ENCODE measurements at regions of chr10 and their contacts with region 1.

Region 1: GRCh38 chr10:8404391-8405120 is 350.1 kb downstream of the GATA3 start:
- DNase-seq: peak; percentile 51
- H3K4me3 Mint-ChIP-seq: peak overlapping the region; percentile 65
- H3K27ac Mint-ChIP-seq: peak overlapping the region; percentile 64
- H3K4me1 Mint-ChIP-seq: peaks cover 80% of the 10 kb centered on the region
- H3K27me3 Mint-ChIP-seq: no peaks in the 10 kb centered on the region

Region 2: DNA sequence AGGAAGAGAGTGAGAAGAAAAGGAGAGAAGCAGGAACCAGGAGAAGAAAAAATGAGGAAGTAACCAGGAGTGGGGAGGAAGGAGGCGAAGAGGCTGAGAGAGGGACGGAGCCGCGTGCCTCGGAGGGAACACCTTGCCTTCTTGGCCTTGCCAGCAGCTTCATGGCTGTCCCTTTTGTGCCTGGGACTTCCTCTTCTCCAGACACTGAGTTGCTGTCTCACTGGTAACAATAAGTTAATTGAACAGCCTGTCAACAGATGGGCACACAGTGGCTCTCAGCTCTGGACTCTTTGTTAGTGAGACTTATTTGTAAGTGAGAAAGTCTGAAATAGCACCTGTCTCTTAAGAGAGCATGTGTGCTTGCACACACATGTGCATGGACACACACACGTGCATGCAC is 266.8 kb before region 1 on chr10:
- CTCF ChIA-PET with region 1: no interaction called
- POLR2A ChIA-PET with region 1: interaction called, 4 read pairs
- intact Hi-C with region 1: loop called (anchors 2 kb)
- DNase-seq: peak; percentile 43
- H3K4me3 Mint-ChIP-seq: peak overlapping the region; percentile 59
- H3K27ac Mint-ChIP-seq: peak overlapping the region; percentile 86
- H3K4me1 Mint-ChIP-seq: peaks cover 57% of the 10 kb centered on the region
- H3K27me3 Mint-ChIP-seq: peaks cover 4% of the 10 kb centered on the region

Region 3: GRCh38 chr10:8279598-8279997 is 125.0 kb before region 1 on chr10:
- CTCF ChIA-PET with region 1: no interaction called
- POLR2A ChIA-PET with region 1: no interaction called
- intact Hi-C with region 1: no loop called
- DNase-seq: no peak
- H3K4me3 Mint-ChIP-seq: no peak overlapping the region
- H3K27ac Mint-ChIP-seq: no peak overlapping the region
- H3K4me1 Mint-ChIP-seq: peaks cover 12% of the 10 kb centered on the region
- H3K27me3 Mint-ChIP-seq: no peaks in the 10 kb centered on the region

Region 4: DNA sequence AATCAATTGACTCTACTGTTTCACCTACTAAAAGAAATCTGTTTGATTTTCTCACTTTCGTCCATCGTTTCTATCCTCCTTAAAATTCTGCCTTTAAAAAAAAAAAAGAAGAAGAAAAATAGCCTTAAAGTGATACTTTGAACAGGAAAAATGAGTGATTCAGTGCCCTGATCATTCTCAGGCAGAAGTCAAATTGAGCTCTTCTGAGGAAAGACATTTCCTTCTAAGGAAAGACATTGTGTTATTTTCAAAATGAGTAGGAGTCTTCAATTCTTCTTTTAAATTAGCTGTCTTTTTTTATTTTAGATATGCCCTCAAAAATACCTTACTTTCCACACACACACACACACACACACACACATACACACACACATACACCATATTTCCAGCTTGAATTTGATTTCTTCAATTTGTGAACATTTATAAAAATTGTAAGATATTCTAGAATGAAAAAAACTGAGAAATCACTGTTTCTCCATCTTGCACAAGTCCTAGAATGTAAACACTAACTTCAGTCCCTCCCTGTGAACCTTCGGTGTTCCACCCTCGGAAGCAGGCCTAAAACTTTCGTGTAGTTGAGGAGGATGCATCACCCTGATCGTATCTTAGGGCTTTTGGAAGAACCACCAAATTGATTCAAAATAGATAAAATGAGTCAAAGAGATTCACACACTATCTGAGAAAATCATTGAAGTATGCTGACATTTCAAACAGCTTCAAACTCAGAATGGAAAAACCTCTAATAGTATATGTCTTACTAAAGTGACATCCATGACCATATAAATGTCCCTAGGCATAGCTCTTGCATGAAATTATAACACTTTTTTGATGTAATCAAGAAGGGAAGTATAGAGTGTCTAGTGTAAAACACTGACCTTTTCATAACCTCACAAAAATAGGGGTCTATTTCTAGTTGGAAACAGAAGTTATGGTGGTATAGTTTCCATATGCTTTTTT is 79.3 kb before region 1 on chr10:
- CTCF ChIA-PET with region 1: interaction called, 4 read pairs
- POLR2A ChIA-PET with region 1: interaction called, 13 read pairs
- intact Hi-C with region 1: loop called (anchors 1 kb)
- DNase-seq: peak; percentile 53
- H3K4me3 Mint-ChIP-seq: peak overlapping the region; percentile 20
- H3K27ac Mint-ChIP-seq: peak overlapping the region; percentile 89
- H3K4me1 Mint-ChIP-seq: peaks cover 52% of the 10 kb centered on the region
- H3K27me3 Mint-ChIP-seq: peaks cover 3% of the 10 kb centered on the region

Region 5: DNA sequence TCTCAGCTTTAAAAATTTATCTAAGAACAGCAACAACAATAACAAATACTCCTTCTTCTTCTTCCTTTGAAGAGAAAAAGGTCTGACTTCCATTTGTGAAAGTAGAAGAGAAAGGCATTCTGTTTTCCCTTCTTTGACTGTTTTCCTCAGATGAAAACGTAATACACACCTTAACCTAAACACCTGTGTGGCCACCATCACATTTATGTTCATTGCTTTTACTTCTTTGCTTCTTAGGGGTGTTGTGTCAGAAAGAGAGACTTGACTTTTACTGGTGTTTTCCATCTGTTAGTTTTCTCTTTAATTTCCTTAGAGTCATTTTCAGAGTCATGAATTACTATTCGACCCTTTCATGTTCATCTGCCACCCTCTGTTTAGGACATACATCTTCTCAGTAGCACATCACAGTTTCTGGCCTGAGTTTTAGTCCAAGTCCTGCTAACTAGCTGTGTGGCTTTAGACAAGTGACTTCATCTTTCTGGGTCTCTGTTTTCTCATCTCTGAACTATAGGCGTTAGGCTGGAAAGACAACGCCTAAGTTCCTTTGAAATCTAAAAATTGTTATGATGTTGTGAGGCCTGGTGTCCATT is 66.3 kb before region 1 on chr10:
- CTCF ChIA-PET with region 1: no interaction called
- POLR2A ChIA-PET with region 1: interaction called, 4 read pairs
- intact Hi-C with region 1: loop called (anchors 1 kb)
- DNase-seq: peak; percentile 29
- H3K4me3 Mint-ChIP-seq: peak overlapping the region; percentile 64
- H3K27ac Mint-ChIP-seq: peak overlapping the region; percentile 94
- H3K4me1 Mint-ChIP-seq: peaks cover 45% of the 10 kb centered on the region
- H3K27me3 Mint-ChIP-seq: peaks cover 3% of the 10 kb centered on the region

Region 6: DNA sequence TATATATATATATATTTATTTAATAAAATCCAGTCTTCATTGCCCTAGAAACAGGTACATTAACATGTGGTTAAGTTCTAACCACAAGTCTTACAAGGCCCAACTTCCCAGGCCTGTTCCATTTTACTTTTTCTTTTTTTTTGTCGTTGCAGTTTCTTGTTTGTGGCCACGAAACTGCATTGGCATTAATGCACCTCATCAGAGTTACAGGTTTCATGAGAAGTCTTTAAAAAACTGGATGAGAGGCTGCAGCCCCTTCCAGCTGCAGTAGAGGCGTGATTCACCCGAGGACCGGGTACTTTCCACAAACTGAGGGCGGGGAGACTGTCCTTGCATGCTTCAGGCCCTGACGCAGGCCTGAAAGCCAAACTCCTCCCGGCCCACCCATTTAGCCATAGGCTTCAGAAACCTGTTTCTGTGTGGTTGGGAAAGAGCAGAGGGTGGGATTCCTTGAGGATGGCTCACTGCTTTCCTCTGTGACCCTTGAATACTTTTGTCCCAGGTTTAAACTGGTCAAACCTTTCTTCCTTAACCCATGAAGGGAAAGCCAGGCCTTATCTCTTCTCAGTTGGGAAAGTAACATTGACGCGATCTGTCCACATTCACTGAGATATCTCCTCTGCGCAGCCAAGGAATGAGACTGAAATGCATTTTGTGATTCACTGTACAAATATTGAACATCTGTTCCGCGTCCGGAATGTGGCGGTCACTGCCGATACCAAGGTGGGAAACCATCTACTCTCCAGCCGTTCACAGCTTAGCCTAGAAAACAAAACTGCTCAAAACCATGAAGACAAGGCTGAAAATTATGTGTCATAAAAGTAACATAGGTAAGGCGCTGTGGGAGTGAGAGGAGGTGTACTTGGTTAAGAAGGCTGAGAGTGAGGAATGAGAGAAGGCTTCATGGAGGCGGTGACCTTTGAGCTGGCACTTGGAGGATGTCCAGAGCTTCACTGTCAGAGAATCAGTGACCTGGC is 38.3 kb before region 1 on chr10:
- CTCF ChIA-PET with region 1: interaction called, 3 read pairs
- POLR2A ChIA-PET with region 1: interaction called, 10 read pairs
- intact Hi-C with region 1: loop called (anchors 2 kb)
- DNase-seq: peak; percentile 82
- H3K4me3 Mint-ChIP-seq: no peak overlapping the region
- H3K27ac Mint-ChIP-seq: peak overlapping the region; percentile 91
- H3K4me1 Mint-ChIP-seq: peaks cover 58% of the 10 kb centered on the region
- H3K27me3 Mint-ChIP-seq: no peaks in the 10 kb centered on the region

Region 7: DNA sequence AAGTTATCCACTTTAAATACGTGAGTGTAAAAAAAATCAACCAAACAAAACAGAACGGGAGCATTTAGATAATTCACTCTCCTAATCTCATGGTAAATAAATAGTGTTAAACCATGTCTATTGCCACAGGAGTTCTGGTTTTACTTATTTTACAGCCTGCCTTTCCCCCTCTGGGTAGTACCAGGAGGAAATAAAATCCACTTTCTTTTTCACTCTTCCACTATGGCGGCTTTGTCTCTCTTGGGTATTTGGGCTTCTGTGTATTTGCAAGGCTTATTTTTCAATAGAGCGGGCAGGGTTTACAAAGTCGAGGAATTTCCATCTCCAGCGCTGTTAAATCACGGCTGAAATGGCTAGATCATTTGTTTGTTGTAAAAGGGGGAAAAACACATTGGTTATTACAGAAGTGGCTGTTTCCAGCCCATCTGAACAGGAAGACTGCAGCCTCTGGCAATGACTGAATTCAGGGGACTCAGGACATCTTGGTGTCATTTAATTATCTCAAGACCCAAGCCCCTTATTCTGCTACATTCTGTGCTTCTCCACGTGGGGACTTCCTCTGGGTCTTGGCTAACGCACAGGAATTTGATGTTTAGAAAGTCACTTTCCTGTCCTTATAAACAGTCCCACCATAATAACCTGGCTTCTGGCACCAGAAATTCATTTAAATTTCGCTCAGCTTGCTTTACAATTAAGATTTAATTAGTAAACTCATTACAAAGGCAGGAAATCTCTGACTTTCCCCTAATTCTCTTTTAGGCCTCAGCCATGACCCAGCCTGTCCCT is 26.2 kb before region 1 on chr10:
- CTCF ChIA-PET with region 1: no interaction called
- POLR2A ChIA-PET with region 1: no interaction called
- intact Hi-C with region 1: no loop called
- DNase-seq: no peak
- H3K4me3 Mint-ChIP-seq: no peak overlapping the region
- H3K27ac Mint-ChIP-seq: no peak overlapping the region
- H3K4me1 Mint-ChIP-seq: peaks cover 8% of the 10 kb centered on the region
- H3K27me3 Mint-ChIP-seq: no peaks in the 10 kb centered on the region

Region 8: DNA sequence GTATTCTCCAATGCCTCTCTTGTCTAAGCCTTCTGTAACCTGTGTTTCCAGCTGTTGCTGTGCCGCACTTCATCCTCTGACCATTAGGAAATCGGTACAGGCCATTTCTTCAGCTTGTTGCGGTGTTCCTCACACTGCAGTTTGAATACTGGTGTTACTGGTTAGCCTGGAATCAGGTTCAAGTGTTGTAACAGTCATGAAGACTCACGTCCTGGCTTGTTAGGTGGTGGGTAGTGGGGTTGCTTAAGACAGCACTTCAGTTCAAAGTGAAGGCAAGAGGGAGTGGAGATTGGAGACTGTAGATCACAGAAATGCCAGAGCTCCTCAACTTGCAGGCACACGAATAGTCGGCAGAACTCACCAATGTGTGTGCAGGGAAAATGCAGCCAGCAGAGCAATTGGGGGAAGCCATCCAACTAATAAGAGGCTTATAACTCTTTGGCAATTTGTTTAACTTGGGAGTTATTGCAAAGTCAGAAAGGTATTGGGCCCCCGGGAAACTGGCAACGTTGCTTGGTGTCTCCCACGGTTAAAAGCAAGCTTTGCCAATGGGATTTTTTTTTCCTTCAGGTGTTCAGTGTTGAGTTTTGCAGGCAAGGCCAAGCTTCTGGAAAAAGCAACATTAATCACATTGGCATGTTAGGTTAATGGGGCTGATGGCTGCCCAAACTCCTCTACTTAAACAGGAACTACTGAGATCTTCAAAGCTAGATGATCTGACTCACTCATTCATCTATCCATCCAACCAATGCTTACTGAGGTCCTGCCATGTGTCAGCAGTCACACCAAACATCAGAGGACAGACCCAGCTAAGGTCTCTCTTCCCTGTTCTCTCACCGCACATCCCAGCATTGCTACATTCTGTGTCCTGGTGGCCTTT is 30.9 kb after region 1 on chr10:
- CTCF ChIA-PET with region 1: no interaction called
- POLR2A ChIA-PET with region 1: no interaction called
- intact Hi-C with region 1: no loop called
- DNase-seq: no peak
- H3K4me3 Mint-ChIP-seq: no peak overlapping the region
- H3K27ac Mint-ChIP-seq: no peak overlapping the region
- H3K4me1 Mint-ChIP-seq: peaks cover 31% of the 10 kb centered on the region
- H3K27me3 Mint-ChIP-seq: no peaks in the 10 kb centered on the region

Region 9: DNA sequence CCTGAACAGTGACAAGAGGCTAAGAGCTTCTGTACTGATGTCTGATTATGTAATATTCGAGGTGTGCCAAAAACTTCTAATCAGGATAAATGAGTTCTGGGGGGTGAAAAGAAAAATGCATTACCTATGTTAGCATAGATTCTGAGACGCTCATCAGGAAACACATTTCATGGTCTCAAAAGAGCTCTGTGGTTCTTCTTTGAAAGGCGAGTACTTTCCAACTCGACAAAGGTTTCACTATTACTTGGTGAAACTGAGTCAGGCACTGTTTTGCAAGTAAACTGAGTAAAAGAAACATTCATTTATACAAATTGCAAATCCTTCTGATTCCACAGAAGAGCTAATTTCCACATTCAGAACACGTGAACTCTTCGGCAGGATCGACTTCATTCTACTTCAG is 173.1 kb after region 1 on chr10:
- CTCF ChIA-PET with region 1: no interaction called
- POLR2A ChIA-PET with region 1: no interaction called
- intact Hi-C with region 1: loop called (anchors 5 kb)
- DNase-seq: peak; percentile 38
- H3K4me3 Mint-ChIP-seq: peak overlapping the region; percentile 13
- H3K27ac Mint-ChIP-seq: peak overlapping the region; percentile 74
- H3K4me1 Mint-ChIP-seq: peaks cover 49% of the 10 kb centered on the region
- H3K27me3 Mint-ChIP-seq: peaks cover 26% of the 10 kb centered on the region

Measured in activated CD4-positive, alpha-beta memory T cell treated with anti-CD3 and anti-CD28 coated beads for 36 hours (primary cell).